ENCODE measurements at regions of chr12 and their contacts with region 1.

Region 1: DNA sequence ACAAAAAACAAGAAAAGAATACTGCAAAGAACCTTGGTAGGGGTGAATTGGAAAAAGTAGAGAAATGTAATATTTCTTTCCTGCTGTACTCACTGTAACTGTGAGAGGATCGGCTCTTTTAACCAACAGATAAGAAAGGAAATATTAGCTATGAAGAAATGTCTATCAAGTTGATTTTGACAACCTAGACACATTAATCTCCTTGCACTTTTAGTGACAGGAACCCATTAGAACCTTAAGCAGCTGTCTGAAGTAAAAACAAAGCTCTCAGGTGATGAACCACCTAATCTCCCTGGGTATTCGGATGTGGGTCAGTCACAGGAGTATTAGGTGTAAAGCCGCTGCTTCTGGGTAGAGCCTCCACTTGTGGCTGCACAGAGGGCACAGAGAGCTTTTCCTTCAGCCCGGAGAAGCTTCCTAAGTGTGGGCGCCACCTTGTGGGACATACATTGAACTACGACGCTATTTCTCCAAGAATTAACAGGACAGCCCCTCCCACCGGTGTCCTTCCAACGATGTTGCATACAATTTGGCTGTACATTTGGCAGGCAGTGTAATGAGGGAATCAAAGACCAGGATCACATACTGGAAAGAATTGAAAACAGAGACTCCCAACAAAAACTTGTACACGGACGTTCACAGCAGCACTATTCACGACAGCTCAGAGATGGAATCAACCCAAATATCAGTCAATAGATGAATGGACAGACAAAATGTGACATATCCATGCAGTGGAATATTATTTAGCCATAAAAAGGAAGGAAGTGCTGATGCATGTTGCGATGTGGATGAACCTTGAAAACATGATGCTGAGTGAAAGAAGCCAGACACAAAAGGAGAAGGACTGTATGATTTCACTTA is 28.9 kb upstream of the MAPKAPK5 start:
- DNase-seq: peak; percentile 86
- CTCF ChIP-seq: peak; percentile 74

Region 2: GRCh38 chr12:111578274-111578970 is 234.7 kb before region 1 on chr12:
- CTCF ChIA-PET with region 1: no interaction called
- POLR2A ChIA-PET with region 1: no interaction called
- DNase-seq: peak; percentile 31
- CTCF ChIP-seq: no peak

Region 3: DNA sequence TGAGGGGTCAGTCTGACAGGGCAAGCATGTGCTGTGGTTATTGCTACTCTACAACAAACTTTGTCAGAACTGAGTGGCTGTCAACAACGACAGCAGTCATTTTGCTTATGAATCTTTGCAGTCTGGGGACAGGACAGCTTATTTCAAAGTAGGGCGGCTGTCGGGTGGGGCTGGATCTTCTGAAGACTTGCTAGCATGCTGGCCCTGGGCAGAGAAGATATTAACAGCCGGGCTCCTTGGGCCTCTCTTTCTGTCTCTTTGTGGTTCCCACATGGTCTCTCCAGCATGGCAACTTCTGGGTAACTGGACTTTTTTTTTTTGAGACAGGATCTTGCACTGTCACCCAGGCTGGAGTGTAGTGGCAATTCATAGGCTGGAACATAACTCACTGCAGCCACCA is 80.3 kb before region 1 on chr12:
- CTCF ChIA-PET with region 1: interaction called, 10 read pairs
- POLR2A ChIA-PET with region 1: no interaction called
- DNase-seq: no peak
- CTCF ChIP-seq: no peak

Region 4: DNA sequence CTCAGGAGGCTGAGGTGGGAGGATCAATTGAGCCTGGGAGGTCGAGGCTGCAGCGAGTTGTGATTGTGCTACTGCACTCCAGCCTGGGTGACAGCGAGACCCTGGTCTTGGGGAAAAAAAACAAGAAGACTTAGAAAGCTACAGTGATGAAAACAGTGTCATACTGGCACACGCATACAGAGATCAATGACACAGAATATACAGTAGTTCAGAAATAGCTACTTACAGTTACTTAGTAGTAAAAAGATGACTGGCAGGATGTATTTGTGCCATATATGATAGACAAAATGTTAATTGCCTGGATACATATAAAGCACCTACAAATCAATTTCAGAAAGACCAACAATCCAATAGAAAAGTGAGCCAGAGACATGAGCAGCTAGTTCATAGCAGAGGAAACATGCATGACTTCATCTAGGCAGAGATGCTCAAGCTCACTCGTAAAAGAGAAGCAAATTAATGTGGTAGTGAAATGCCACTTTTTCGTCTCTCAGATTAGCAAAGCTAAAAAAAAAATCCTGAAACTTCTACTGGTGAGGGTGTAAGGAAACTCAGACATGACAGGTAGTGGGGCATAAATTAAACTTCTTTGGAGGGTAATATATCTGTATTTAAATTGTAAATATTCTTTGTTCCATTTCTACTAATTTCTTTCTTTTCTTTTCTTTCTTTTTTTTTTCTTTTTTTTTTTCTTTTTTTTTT is 48.8 kb before region 1 on chr12:
- CTCF ChIA-PET with region 1: interaction called, 18 read pairs
- POLR2A ChIA-PET with region 1: no interaction called
- DNase-seq: no peak
- CTCF ChIP-seq: no peak

Region 5: DNA sequence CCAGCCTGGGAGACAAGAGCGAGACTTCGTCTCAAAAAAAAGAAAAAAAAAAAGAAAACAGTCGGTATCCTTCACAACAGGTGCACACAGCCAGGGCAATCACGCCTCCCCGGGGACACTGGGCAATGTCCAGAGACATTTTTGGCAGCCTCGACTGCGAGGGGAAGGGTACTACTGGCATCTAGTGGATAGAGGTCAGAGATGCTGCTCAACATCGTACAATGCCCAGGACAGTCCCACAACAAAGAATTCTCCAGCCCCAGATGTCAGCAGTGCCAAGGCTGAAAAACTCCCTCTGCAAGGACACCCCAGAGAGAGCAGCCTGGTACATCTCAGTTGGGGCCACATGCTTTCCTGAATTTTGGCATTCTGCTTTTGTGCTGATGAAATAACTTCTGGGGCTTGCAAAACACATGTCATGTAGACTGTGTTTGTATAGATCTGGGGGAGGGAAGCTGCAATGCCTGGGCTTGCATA is 24.9 kb before region 1 on chr12:
- CTCF ChIA-PET with region 1: interaction called, 10 read pairs
- POLR2A ChIA-PET with region 1: no interaction called
- DNase-seq: no peak
- CTCF ChIP-seq: peak; percentile 33

Region 6: DNA sequence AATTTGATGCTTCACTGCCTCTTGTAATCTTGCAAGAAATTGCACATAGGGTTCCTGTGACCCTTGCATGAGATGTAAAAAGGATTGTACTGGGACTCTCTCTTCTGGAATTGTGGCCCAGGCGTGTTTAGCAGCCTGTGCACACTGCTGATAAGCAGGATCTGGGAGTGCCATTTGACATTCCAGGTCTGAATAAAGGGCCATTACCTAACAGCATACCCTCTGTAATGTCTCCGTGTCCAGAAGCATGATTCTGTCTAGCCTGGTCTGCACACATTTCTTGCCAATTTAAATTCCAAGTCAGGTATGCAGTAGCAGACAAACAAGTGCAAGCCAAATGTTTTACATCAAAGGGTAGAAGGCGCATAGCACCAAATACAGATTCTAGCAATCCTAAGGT is 10.8 kb after region 1 on chr12:
- CTCF ChIA-PET with region 1: interaction called, 26 read pairs
- POLR2A ChIA-PET with region 1: no interaction called
- DNase-seq: no peak
- CTCF ChIP-seq: no peak

Region 7: DNA sequence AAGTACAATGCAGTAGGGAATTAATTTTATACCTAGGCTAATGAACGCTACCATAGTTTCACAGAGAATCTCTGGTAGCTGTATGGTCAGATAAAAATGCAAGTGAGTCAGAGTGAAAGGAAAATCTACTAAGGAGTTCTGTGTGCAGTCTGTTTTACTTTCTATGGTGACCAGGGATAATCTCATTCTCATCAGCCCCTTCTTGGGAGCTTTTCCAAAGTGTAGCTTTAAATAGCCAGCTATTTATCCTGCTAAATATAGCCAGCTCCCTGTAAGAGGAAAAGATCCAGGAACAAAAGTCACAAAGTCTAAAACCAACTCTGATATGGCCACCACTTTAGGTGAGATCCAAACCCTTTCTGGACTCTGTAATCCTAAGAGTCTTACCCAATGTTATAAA is 124.3 kb after region 1 on chr12:
- CTCF ChIA-PET with region 1: no interaction called
- POLR2A ChIA-PET with region 1: no interaction called
- DNase-seq: no peak
- CTCF ChIP-seq: no peak

Region 8: GRCh38 chr12:112012775-112013600 is 199.9 kb after region 1 on chr12 and contains the starts of genes ERP29 and TMEM116:
- CTCF ChIA-PET with region 1: no interaction called
- POLR2A ChIA-PET with region 1: no interaction called
- DNase-seq: peak; percentile 100
- CTCF ChIP-seq: peak; percentile 52

Measured in GM10248 (cell line).